CD8-positive, alpha-beta T cell (primary cell): ENCODE measurements at regions of chr9 and their contacts with region 1.

Region 1: DNA sequence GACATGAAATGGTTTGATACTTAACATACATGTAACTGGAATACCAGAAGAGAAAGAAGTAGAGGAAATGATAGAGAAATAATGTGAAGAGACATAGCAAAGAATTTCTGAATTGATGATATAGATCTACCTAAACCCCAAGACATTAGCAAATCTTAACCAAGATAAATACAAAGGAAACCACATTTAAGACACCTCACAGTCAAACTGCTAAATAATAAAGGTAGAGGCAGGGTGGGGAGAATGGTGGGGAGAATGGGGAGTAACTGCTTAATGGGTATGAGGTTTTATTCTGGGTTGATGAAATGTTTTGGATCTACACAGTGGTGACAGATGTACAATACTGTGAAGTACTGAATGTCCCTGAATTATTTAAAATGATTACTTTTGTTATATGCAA is 17.5 kb downstream of the CARNMT1 start:
- DNase-seq: peak in 2 of 9 experiments; percentile 26 to 45
- ATAC-seq: peak; percentile 55
- H3K4me3 ChIP-seq: no peak overlapping the region
- H3K4me3 Mint-ChIP-seq: no peak overlapping the region
- H3K27ac ChIP-seq: no peak overlapping the region
- H3K27ac Mint-ChIP-seq: peak overlapping the region; percentile 63
- H3K4me1 ChIP-seq: peaks cover 20% of the 10 kb centered on the region
- H3K4me1 Mint-ChIP-seq: peaks cover 31% of the 10 kb centered on the region
- H3K27me3 ChIP-seq: no peaks in the 10 kb centered on the region
- H3K27me3 Mint-ChIP-seq: no peaks in the 10 kb centered on the region
- CTCF ChIP-seq: no peak

Region 2: DNA sequence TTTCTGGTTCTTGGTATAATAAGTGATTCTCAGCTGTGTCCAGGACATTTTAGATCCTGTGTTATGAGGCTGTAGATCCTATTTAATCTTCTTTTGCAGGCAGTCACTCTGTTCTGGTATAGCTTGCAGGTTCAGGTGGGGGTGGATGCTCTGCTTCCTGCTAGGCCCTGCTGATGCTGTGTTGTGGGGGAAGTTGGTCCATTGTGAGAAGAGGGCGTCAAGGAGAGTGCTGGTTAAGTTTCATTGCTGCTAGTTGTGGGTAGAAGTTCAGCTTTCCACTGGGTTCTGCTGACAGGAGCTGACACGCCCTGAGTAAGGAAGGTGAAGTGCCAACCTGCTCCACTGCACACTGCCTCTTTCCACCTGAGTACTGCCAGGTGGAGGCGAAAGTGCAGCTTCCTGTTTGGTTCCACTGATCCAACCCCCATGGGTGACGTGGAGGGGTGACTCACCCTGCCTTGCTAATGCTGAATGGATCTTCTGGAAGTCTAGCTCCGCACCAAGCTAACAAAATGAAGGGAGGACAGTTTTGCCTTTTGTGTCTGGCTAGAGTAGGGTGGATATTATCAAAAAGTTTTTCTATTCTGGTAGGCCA is 61.1 kb after region 1 on chr9:
- CTCF ChIA-PET with region 1: interaction called, 3 read pairs
- POLR2A ChIA-PET with region 1: no interaction called
- intact Hi-C with region 1: loop called in 1 of 2 experiments (anchors 2 kb)
- DNase-seq: peak in 6 of 9 experiments; percentile 44 to 75 (median 58)
- ATAC-seq: peak; percentile 97
- H3K4me3 ChIP-seq: no peak overlapping the region
- H3K4me3 Mint-ChIP-seq: no peak overlapping the region
- H3K27ac ChIP-seq: no peak overlapping the region
- H3K27ac Mint-ChIP-seq: peak overlapping the region; percentile 85
- H3K4me1 ChIP-seq: peaks cover 7% of the 10 kb centered on the region
- H3K4me1 Mint-ChIP-seq: peaks cover 17% of the 10 kb centered on the region
- H3K27me3 ChIP-seq: no peaks in the 10 kb centered on the region
- H3K27me3 Mint-ChIP-seq: no peaks in the 10 kb centered on the region
- CTCF ChIP-seq: no peak